Activated CD4-positive, alpha-beta T cell treated with anti-CD3 and anti-CD28 coated beads, Interleukin-2, amount 10 ng/mL, durations not matched to agents 24 days and 14 days (primary cell): ENCODE measurements at regions of chr10 and their contacts with region 1.

Region 1: GRCh38 chr10:113854011-113854760 is at the starts of genes DCLRE1A and NHLRC2:
- DNase-seq: peak; percentile 87
- H3K4me3 Mint-ChIP-seq: peak within 1 kb of the TSS; percentile 98
- H3K27ac Mint-ChIP-seq: peak within 1 kb of the TSS; percentile 95
- H3K4me1 Mint-ChIP-seq: peaks cover 33% of the 10 kb centered on the region
- H3K27me3 Mint-ChIP-seq: no peaks in the 10 kb centered on the region
- total RNA-seq, gene DCLRE1A: 14.4 and 14.6 TPM in 2 replicates
- total RNA-seq, gene NHLRC2: 23.6 and 27.2 TPM in 2 replicates

Region 2: GRCh38 chr10:113678690-113679462 is 175.3 kb before region 1 on chr10:
- intact Hi-C with region 1: loop called (anchors 1 kb)
- DNase-seq: peak; percentile 92
- H3K4me3 Mint-ChIP-seq: peak overlapping the region; percentile 89
- H3K27ac Mint-ChIP-seq: peak overlapping the region; percentile 89
- H3K4me1 Mint-ChIP-seq: peaks cover 37% of the 10 kb centered on the region
- H3K27me3 Mint-ChIP-seq: peaks cover 9% of the 10 kb centered on the region

Region 3: DNA sequence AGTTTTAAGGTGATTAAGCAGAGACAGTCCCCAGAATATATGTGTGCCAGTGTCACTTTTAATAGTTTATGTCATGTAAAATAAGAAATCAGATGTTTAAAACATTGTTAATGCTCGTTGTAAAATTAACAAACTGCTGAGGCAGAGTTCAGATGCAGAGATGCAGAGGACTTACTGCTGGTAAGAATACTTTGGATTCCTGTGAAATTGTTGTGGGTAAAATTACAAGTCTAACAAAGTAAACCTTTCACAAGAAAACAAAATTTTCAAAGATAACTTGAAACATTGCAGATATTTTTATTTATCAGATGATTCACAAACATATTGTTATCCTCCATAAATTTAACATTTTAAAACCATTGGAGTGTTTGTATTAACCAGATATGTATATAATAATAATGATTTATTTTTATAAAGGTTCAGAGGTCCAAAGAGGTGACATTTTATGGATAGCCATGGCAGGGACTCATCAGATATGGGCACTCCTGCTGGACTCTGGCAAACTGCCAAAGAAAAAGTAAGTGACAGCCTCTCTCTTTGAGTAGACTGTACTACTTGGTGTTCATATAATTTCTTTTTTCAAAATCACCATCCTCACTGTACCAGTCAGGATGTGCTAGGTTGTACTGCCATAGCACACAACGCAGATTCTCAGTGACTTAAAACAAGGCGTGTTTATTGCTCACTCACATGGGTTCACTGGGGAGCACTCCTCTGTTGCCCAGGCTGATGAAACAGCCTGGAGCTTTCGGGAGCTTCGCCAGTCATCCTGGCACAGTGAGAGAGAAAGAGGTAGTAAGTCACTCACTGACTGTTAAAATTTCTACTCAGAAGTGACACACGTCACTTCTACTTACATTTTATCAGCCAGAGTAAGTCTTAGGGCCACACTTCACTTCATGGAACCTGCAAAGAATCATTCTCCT is 43.8 kb after region 1 on chr10:
- intact Hi-C with region 1: no loop called
- DNase-seq: no peak
- H3K4me3 Mint-ChIP-seq: no peak overlapping the region
- H3K27ac Mint-ChIP-seq: no peak overlapping the region
- H3K4me1 Mint-ChIP-seq: peaks cover 2% of the 10 kb centered on the region
- H3K27me3 Mint-ChIP-seq: no peaks in the 10 kb centered on the region

Region 4: DNA sequence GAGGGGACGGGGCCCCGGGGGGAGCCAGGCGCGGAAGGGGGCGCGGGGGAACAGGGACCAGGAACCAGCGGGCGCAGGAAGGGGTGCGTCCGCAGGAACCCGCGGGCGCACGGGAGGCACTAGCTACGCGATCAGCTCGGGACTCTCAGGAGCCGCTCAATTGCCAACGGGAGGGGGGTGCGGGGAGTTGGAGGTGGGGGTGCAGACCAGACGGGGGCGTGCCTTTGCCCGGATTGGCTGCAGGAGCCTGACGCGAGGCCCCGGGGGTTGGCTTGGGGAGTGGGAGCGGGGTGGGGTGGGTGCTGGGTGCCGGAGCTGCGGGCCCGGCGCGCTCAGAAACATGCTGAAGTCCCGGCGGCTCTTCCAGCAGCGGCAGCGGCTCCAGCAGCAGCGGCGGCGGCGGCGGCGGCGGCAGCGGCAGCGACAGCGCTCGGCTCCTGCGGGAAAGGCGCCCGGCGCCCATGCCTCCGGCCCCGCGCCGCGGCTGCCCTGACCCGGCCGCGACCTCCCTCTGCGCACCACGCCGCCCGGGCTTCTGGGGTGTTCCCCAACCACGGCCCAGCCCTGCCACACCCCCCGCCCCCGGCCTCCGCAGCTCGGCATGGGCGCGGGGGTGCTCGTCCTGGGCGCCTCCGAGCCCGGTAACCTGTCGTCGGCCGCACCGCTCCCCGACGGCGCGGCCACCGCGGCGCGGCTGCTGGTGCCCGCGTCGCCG is 189.5 kb after region 1 on chr10 and contains the start of gene ADRB1:
- intact Hi-C with region 1: loop called (anchors 10 kb)
- DNase-seq: peak; percentile 70
- H3K4me3 Mint-ChIP-seq: peak within 1 kb of the TSS; percentile 71
- H3K27ac Mint-ChIP-seq: no peak within 1 kb of the TSS
- H3K4me1 Mint-ChIP-seq: peaks cover 16% of the 10 kb centered on the region
- H3K27me3 Mint-ChIP-seq: peaks cover 80% of the 10 kb centered on the region
- total RNA-seq, gene ADRB1: not detected in 2 replicates

Region 5: DNA sequence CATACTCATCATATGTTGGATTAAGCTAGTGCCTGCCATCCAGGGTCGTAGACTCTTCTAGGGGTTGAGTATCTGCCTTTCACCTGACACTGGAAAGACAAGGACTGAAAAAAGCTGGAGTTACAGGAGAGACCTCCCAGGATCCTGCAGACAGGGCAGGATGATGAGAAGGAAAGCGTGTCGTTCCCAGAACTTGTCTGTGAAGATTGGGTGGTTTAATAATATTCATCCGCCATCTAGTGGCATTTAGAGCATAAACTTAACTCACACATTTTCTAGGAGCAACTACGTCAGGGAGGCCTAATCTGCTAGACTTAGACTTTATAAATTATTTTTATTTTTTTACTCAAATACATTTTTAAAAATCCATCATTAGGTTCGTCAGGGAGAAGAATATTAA is 249.1 kb after region 1 on chr10:
- intact Hi-C with region 1: loop called (anchors 5 kb)
- DNase-seq: no peak
- H3K4me3 Mint-ChIP-seq: no peak overlapping the region
- H3K27ac Mint-ChIP-seq: no peak overlapping the region
- H3K4me1 Mint-ChIP-seq: peaks cover 18% of the 10 kb centered on the region
- H3K27me3 Mint-ChIP-seq: peaks cover 50% of the 10 kb centered on the region

Region 6: GRCh38 chr10:114526504-114527238 is 672.5 kb after region 1 on chr10:
- intact Hi-C with region 1: loop called (anchors 10 kb)
- DNase-seq: peak; percentile 97
- H3K4me3 Mint-ChIP-seq: peak overlapping the region; percentile 78
- H3K27ac Mint-ChIP-seq: peak overlapping the region; percentile 97
- H3K4me1 Mint-ChIP-seq: peaks cover 53% of the 10 kb centered on the region
- H3K27me3 Mint-ChIP-seq: no peaks in the 10 kb centered on the region